ENCODE measurements at regions of chr9 and their contacts with region 1.

Region 1: GRCh38 chr9:3628239-3628638 is 102.4 kb upstream of the RFX3 start:
- DNase-seq: no peak
- H3K4me3 ChIP-seq: no peak overlapping the region
- H3K27ac ChIP-seq: no peak overlapping the region
- H3K4me1 ChIP-seq: no peaks in the 10 kb centered on the region
- H3K27me3 ChIP-seq: no peaks in the 10 kb centered on the region
- CTCF ChIP-seq: no peak
- POLR2A ChIP-seq: no peak

Region 2: GRCh38 chr9:3614654-3615053 is 13.6 kb before region 1 on chr9:
- intact Hi-C with region 1: loop called (anchors 1 kb)
- DNase-seq: no peak
- H3K4me3 ChIP-seq: no peak overlapping the region
- H3K27ac ChIP-seq: no peak overlapping the region
- H3K4me1 ChIP-seq: no peaks in the 10 kb centered on the region
- H3K27me3 ChIP-seq: no peaks in the 10 kb centered on the region
- CTCF ChIP-seq: no peak
- POLR2A ChIP-seq: no peak

Region 3: DNA sequence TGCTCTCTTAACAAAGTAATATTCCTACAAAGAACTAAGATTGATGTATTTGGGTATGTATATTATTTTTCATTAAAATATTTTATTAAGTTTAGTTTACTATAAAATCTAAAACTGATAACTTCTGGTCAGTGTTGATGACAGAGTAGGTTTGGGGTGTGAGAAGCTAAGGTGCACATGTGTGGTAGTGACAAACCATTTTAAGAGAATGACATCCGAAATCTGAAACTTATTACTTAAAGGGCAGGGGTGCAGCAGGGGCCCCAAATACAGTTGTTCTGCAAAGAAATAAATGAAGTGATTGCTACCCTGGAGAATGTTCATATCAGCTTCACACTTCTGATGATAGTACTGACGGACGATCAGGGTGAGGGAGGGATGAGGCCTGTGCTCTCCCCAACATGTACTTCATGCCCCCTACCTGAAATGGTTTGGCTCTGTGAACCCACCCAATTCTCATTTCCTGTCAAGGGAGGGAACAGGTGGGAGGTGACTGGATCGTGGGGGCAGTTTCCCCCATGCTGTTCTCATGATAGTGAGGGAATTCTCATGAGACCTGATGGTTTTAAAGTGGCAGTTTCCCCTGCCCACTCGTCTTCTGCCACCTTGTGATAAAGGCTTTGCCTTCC is 22.9 kb after region 1 on chr9:
- intact Hi-C with region 1: no loop called
- DNase-seq: no peak
- H3K4me3 ChIP-seq: no peak overlapping the region
- H3K27ac ChIP-seq: no peak overlapping the region
- H3K4me1 ChIP-seq: no peaks in the 10 kb centered on the region
- H3K27me3 ChIP-seq: no peaks in the 10 kb centered on the region
- CTCF ChIP-seq: no peak
- POLR2A ChIP-seq: no peak

Region 4: GRCh38 chr9:3675946-3676345 is 47.7 kb after region 1 on chr9:
- intact Hi-C with region 1: no loop called
- DNase-seq: no peak
- H3K4me3 ChIP-seq: no peak overlapping the region
- H3K27ac ChIP-seq: no peak overlapping the region
- H3K4me1 ChIP-seq: no peaks in the 10 kb centered on the region
- H3K27me3 ChIP-seq: no peaks in the 10 kb centered on the region
- CTCF ChIP-seq: no peak
- POLR2A ChIP-seq: no peak

Region 5: GRCh38 chr9:4464911-4465513 is 836.8 kb after region 1 on chr9:
- intact Hi-C with region 1: no loop called
- DNase-seq: no peak
- H3K4me3 ChIP-seq: no peak overlapping the region
- H3K27ac ChIP-seq: no peak overlapping the region
- H3K4me1 ChIP-seq: no peaks in the 10 kb centered on the region
- H3K27me3 ChIP-seq: no peaks in the 10 kb centered on the region
- CTCF ChIP-seq: no peak
- POLR2A ChIP-seq: no peak